ENCODE measurements at regions of chr19 and their contacts with region 1.

Region 1: DNA sequence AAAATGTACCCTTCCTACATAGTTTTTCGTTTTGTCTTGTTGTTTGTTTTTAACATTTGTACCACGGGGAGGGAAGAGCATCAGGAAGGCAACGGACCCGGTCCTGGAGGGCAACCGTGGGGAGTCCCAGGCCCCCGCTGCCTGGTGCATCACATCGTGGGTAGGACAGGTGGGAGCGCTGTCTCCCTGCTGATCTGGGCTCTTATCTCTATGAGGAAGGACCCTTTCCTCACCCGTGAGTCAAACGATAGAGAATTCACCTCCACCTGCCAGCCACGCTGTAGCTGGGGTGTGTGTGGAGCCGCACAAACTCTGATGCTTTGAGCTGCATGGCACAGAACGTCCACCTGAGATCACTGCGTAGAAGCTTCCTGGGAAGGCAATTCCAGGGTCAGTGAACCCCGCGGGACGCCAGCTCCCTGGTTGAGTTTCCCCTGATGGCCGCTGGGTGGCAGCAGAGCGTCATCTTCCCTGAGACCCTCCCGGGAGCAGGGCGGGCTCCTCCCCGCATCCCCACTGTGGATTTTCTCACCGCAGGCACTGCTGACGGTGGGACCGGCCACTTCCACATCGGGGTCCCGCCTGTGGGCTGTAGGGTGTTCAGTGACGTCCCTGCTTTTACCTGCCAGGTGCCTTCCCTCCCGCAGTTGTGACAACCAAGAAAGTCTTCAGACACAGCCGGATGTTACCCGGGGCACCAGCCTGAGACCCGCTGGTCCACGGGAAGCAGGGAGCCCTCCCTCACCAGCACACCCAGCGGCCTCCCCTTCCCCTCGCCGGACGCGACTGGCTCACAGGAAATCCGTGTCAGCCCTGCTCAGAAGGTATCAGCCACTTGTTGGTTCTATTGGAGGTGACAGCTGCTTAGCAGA is 54.7 kb downstream of the ZNF787 start:
- DNase-seq: peak; percentile 26
- H3K4me3 ChIP-seq: peak overlapping the region in 2 of 3 experiments; percentile 13 to 18
- H3K27ac ChIP-seq: no peak overlapping the region
- H3K4me1 ChIP-seq: peaks cover 4% of the 10 kb centered on the region
- H3K27me3 ChIP-seq: no peaks in the 10 kb centered on the region
- CTCF ChIP-seq: peak; percentile 69 to 88

Region 2: DNA sequence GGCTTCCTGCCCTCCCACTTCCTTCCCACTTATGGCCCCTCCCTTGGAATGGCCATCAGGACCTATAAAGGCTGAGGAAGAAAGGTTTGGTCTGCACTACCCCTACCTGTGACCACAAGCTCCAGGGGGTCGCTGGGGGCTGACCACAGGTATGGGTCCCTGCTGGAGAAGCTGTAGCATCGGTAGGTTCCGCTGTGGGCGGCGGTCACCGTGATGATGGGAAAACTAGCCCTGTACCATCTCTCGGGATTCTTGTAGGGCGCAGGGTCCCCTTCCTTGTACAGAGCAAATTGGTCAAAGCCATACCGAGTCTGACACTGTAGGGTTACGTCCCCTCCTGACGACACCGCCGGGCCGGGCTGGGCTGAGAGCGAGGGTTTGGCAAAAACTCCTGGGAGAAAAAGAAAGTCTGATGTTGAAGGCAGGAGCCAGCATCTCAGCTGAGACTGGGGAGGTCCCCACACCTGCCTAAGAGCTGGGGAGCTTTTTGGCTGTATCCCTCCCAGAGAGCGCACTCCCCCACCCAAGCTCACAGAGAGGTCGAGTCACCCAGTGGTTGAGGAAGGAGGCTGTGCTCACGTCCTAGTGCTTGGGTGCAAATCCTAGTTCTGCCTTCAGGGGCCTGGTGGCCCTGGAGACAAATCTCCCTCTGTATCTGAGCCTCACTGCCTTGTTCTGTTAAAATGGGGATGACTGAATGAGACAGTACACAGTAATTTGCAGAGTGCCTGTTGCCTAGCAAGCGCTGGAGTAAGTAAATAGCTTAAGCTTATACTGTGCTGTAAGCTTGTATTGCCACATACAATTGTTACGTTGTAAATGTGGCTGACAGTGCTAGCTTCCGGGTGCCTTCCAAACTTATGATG is 1038.7 kb before region 1 on chr19:
- CTCF ChIA-PET with region 1: no interaction called
- dilution Hi-C with region 1: loop called (anchors 10 kb)
- in situ Hi-C with region 1: no loop called
- intact Hi-C with region 1: no loop called
- DNase-seq: no peak
- H3K4me3 ChIP-seq: no peak overlapping the region
- H3K27ac ChIP-seq: no peak overlapping the region
- H3K4me1 ChIP-seq: no peaks in the 10 kb centered on the region
- H3K27me3 ChIP-seq: no peaks in the 10 kb centered on the region
- CTCF ChIP-seq: no peak

Region 3: DNA sequence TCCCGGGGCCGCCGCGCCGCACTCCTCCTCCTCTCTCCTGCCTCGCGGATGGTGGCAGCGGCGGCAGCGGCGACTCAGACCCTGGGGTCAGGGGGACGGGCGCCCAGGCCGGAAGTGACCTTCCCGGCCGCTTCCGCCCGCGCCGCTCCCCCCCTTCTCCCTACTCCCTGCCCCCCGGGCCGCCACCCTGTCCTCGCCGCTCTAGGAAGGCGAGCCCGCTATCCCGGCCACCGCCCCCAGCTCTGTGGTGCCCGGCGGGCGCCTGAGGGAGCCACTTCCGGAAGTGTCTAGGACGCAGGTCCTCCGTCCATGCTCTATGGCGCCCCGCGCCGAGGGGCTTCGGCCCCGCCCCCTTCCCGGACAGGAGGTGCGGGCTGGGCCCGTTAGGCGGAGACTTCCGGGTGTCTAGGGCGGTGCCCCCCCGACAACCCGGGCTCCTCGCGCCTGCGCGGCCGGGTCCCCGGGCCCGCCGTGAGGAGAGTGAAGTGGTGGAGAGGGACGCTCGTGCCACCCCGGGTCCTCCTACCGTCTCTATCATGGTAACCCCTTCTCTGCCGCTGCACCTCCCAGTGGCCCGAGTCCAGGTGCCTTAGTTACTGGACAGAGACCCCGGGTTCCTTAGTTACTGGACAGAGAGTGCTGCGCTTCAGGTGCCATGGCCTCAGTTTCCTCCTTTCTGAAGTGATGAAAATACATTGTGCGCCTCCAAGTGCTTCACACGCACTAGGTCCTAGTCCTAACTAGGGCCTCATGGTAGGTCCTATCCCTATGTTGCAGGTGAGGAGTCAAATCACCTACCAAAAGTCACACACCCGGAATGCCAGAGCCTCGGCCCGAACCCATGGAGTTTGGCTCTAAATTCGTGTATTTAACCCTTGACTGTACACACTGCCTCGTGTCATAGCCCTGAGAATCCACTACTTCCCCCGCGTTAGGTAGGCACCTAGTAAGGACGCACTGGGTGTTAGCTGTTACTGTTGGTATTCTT is 55.1 kb after region 1 on chr19 and contains the start of gene ZNF787:
- CTCF ChIA-PET with region 1: no interaction called
- dilution Hi-C with region 1: loop called (anchors 5 kb)
- in situ Hi-C with region 1: no loop called
- intact Hi-C with region 1: no loop called
- DNase-seq: peak; percentile 97
- H3K4me3 ChIP-seq: peak within 1 kb of the TSS; percentile 76 to 83 (median 81)
- H3K27ac ChIP-seq: peak within 1 kb of the TSS; percentile 78
- H3K4me1 ChIP-seq: peaks cover 14% of the 10 kb centered on the region
- H3K27me3 ChIP-seq: no peaks in the 10 kb centered on the region
- CTCF ChIP-seq: no peak
- total RNA-seq, gene ZNF787: 25.5 to 41.0 TPM

Region 4: DNA sequence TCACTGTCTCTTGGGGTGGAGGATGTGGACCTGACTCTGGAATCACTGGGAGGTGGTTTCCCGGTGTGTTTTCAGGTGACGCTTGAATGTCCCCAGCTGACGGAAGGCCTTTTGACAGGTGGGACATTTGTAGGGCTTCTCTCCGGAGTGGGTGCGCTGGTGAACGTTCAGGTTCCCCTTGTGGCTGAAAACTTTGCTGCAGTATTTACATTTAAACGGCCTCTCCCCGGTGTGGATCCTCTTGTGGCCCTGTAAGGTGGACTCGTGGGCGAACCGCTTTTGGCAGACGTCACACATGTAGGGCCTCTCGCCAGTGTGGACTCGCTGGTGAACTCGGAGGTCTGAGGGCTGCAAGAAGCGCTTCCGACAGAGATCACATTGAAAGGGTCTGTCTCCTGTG is 123.4 kb after region 1 on chr19:
- CTCF ChIA-PET with region 1: no interaction called
- dilution Hi-C with region 1: loop called (anchors 5 kb)
- in situ Hi-C with region 1: no loop called
- intact Hi-C with region 1: no loop called
- DNase-seq: no peak
- H3K4me3 ChIP-seq: no peak overlapping the region
- H3K27ac ChIP-seq: no peak overlapping the region
- H3K4me1 ChIP-seq: no peaks in the 10 kb centered on the region
- H3K27me3 ChIP-seq: no peaks in the 10 kb centered on the region
- CTCF ChIP-seq: no peak

Region 5: GRCh38 chr19:56341948-56342347 is 275.6 kb after region 1 on chr19:
- CTCF ChIA-PET with region 1: no interaction called
- dilution Hi-C with region 1: loop called (anchors 5 kb)
- in situ Hi-C with region 1: no loop called
- intact Hi-C with region 1: no loop called
- DNase-seq: no peak
- H3K4me3 ChIP-seq: no peak overlapping the region
- H3K27ac ChIP-seq: no peak overlapping the region
- H3K4me1 ChIP-seq: no peaks in the 10 kb centered on the region
- H3K27me3 ChIP-seq: no peaks in the 10 kb centered on the region
- CTCF ChIP-seq: no peak